Heart right ventricle (tissue), 16 donors: ENCODE measurements at regions of chr9 and their contacts with region 1.

Region 1: GRCh38 chr9:69421908-69422801 is 97.1 kb downstream of the ENTREP1 start:
- DNase-seq: peak in 1 of 2 donors; percentile 67
- ATAC-seq: peak; percentile 63 to 84 (median 76)
- H3K4me3 ChIP-seq: no peak overlapping the region
- H3K27ac ChIP-seq: no peak overlapping the region
- H3K4me1 ChIP-seq: peaks cover 0 to 3% (median 0%) of the 10 kb centered on the region in 9 donors
- H3K27me3 ChIP-seq: peaks cover 0 to 7% (median 0%) of the 10 kb centered on the region in 7 donors
- CTCF ChIP-seq: peak; percentile 67 to 88 (median 80)

Region 2: DNA sequence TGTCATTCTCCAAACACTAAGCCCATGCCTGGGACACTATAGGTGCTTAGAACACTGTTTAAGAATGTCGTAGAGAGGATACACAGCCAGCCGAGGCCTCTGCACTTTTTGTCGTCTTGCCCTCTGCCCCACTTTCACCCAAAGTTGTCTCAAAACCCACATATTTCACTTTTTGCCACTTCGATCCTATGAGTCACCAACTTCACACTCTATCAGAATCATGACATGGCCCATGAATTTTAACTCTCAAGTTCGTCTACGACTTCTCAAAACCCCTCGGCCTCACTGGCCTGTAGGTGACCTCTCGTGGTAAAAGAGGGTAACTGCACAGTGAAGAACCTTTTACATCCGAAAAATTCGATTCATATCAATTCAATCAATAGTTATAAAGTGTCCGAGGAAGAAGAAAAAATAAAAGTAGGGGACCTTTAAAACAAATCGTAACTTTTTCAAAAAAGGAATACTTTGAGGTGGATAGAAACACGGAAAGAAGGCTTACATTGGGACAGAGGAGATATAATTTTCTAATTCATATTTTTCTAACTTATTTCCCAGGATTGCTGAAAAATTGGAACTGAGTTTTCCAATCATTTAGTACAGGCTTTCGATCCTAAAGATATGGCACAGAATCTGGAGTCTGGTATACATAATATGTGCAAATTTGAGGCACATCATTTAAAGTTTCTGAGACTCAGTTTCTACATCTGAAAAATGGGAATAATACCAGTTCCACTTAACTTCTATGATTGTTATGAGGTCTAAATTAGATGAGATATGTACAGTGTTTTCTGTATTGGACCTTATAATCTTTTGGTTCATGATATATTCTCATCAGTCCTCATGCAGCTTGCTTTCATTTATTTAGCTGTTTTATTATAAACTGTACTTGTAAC is 127.4 kb after region 1 on chr9:
- intact Hi-C with region 1: loop called (anchors 2 to 5 kb)
- DNase-seq: peak in 1 of 2 donors; percentile 17
- ATAC-seq: peak in 6 of 8 donors; percentile 30 to 75 (median 56)
- H3K4me3 ChIP-seq: no peak overlapping the region
- H3K27ac ChIP-seq: no peak overlapping the region
- H3K4me1 ChIP-seq: peaks cover 0 to 5% (median 2%) of the 10 kb centered on the region in 9 donors
- H3K27me3 ChIP-seq: no peaks in the 10 kb centered on the region
- CTCF ChIP-seq: peak; percentile 50 to 92 (median 86)

Region 3: DNA sequence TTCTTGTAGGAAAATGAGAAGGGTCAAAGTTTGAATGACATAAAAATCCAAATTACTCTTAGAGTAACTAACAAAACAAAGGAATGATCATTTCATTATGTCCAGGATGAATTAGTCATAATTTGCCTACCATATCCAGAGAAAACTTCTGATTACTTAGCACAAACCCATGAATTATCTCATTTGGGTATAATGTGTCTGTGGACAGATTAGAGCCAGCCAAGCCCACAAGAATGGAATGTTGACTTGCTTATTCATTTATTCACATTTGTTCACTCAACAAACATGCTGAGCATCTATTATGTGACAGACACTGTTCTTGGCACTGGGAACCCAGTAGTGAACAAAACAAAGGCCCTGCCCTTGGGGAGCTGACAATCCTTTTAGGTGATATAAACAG is 162.6 kb after region 1 on chr9:
- intact Hi-C with region 1: no loop called
- DNase-seq: no peak
- ATAC-seq: no peak
- H3K4me3 ChIP-seq: no peak overlapping the region
- H3K27ac ChIP-seq: no peak overlapping the region
- H3K4me1 ChIP-seq: peaks cover 0 to 24% (median 13%) of the 10 kb centered on the region in 9 donors
- H3K27me3 ChIP-seq: no peaks in the 10 kb centered on the region
- CTCF ChIP-seq: no peak

Region 4: DNA sequence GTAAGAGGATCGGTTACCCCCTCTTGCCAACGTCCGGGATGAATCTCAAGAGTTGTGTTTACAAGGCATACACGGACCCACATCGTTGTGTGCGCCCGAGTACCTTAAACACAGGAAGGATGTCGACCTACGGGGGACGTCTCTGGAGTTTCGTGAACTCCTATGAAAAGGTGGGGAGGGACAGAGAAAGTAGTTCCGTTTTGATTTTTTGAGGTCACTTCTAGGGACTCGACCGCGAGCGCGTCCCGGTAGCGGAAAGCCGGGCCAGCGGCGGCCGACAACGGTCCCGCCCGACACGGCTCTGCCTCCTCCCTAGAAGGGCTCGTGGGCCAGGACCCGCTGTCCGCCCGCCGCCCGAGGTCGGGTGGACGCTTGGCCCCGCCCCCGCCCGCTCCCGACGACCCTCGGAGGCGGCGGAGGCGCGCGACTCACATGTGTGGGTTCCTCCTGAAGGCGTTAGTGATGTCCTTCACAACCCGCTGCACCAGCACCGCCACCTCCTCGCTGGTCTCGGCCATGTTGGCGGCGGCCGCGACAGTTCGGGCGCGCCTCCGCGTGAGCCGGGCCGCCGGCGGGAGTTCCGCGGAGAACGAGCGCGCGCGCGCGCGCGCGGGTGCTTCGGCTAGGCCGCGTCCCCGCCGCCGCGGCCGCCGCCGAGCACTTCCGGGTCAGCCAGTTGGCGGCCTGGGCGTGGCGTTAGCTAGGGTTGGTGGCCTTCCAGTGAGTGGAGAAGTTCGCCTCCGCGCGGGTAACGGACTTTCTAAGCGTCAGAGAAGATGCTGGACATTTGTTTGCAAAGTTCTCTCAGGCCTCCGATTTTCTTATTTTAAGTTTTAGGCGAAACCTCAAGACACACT is 337.5 kb after region 1 on chr9 and contains the start of gene PTAR1:
- intact Hi-C with region 1: loop called in 1 of 10 experiments (anchors 10 kb)
- DNase-seq: peak; percentile 90 to 92
- ATAC-seq: peak; percentile 97 to 98 (median 97)
- H3K4me3 ChIP-seq: peak within 1 kb of the TSS; percentile 72 to 97 (median 84)
- H3K27ac ChIP-seq: peak within 1 kb of the TSS; percentile 86 to 99 (median 98)
- H3K4me1 ChIP-seq: peaks cover 0 to 45% (median 25%) of the 10 kb centered on the region in 9 donors
- H3K27me3 ChIP-seq: no peaks in the 10 kb centered on the region
- CTCF ChIP-seq: no peak
- total RNA-seq, gene PTAR1: 21.8 to 30.2 (median 24.3) TPM

Region 5: DNA sequence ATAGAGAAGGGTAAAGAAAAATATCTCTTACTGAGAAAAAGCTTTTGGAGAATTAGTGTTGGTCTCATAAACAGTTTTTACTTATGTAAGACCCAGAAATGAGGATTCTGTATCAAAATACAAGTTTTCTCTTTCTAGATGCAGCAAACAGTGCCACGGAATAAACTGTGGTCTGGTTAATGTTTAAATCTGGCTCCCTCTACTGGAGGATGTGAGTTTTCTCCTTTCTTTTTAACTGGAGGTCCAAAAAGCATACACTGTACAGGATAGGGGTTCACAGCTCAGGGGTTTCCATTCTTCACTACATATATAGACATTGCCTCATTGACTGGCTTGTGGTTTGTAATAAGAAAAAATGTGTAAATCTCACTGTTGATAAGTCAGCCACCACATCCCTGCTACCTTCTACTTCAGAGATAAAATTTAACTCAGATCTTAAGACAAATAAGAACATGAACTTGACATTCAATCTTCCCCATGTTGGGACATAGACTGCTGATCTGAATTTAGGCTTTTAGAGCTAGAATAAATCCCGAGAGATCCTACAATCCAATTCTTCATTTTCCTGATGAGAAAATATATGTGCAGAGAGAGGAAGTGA is 497.4 kb after region 1 on chr9:
- intact Hi-C with region 1: loop called in 6 of 10 experiments (anchors 5 to 10 kb)
- DNase-seq: peak in 1 of 2 donors; percentile 14
- ATAC-seq: peak in 7 of 8 donors; percentile 63 to 82 (median 68)
- H3K4me3 ChIP-seq: no peak overlapping the region
- H3K27ac ChIP-seq: no peak overlapping the region
- H3K4me1 ChIP-seq: peaks cover 0 to 3% (median 0%) of the 10 kb centered on the region in 9 donors
- H3K27me3 ChIP-seq: peaks cover 0 to 26% (median 6%) of the 10 kb centered on the region in 7 donors
- CTCF ChIP-seq: peak; percentile 41 to 79 (median 72)

Region 6: GRCh38 chr9:70111042-70111602 is 689.0 kb after region 1 on chr9:
- intact Hi-C with region 1: loop called in 2 of 10 experiments (anchors 10 kb)
- DNase-seq: peak; percentile 79 to 86
- ATAC-seq: peak in 7 of 8 donors; percentile 74 to 87 (median 81)
- H3K4me3 ChIP-seq: no peak overlapping the region
- H3K27ac ChIP-seq: peak overlapping the region in 5 of 10 donors; percentile 1 to 54 (median 13)
- H3K4me1 ChIP-seq: peaks cover 0 to 19% (median 8%) of the 10 kb centered on the region in 9 donors
- H3K27me3 ChIP-seq: no peaks in the 10 kb centered on the region
- CTCF ChIP-seq: peak; percentile 64 to 93 (median 86)